K562 (cell line): ENCODE measurements at regions of chr6 and their contacts with region 1.

Region 1: DNA sequence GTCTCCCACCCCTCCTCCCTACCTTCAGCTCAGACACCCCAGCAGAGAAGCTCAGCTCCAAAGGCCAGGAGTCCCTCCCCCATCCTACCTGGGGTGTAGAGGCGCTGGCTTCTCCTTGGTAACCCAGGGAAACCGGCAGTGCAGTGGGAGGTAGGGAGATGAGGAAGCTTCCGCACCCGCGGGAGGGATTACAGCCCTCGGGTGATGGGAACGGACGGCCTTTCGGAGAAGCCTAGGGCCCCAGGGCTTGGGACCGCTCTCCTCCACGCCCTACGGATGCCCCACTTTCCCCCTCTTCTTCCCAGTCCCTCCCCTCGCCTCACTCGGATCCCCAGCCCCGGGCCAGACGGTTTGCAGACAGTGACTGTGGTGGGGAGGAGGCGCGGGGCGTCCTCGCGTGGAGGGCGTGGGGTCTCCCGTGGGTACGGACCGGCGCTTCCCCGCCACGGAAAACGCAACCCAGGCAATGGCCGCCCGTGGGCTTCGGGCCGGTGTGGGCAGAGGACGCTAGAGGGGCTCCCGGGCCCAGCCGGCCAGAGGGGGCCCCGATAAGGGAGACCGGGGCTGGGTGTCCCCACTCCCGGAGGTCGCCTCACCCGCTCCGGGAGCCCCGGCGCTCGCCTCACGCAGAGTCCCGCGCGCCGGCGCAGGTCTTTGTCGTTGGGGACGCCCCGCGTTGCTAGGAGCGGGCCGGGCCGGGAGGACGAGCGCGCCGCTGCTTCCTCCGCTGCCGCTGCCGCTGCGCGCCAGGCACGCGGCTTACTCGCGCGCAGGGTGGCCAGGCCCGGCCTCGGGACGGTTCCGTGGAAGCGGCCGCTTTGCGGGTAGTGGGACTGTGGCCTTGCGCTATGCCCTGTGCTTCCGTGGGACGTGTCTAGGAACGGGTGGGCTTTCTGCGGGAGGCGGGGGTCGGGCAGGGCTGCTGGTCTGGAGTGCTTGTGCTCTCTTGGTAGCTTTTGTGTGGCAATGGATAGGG is 15.8 kb downstream of the AARS2 start:
- DNase-seq: peak; percentile 53 to 79 (median 70)
- ATAC-seq: peak; percentile 85
- H3K4me3 ChIP-seq: peak overlapping the region; percentile 36
- H3K27ac ChIP-seq: no peak overlapping the region
- H3K4me1 ChIP-seq: peaks cover 0 to 16% of the 10 kb centered on the region in 2 experiments; a peak in 4 of 5 replicates
- H3K27me3 ChIP-seq: peaks cover 34 to 40% of the 10 kb centered on the region in 2 experiments; a peak in 4 of 5 replicates
- CTCF ChIP-seq: no peak
- EP300 ChIP-seq: no peak
- POLR2A ChIP-seq: peak; percentile 25; the same call in 1 of the 2 replicates
- RAD21 ChIP-seq: no peak

Region 2: GRCh38 chr6:44285552-44286284 is 11.6 kb before region 1 on chr6:
- CTCF ChIA-PET with region 1: no interaction called
- POLR2A ChIA-PET with region 1: interaction called, 20 read pairs
- in situ Hi-C with region 1: no loop called
- intact Hi-C with region 1: no loop called
- DNase-seq: peak in 2 of 4 experiments; percentile 47 to 55
- ATAC-seq: peak; percentile 72
- H3K4me3 ChIP-seq: no peak overlapping the region
- H3K27ac ChIP-seq: no peak overlapping the region
- H3K4me1 ChIP-seq: peaks cover 0 to 9% of the 10 kb centered on the region in 2 experiments; a peak in 2 of 5 replicates
- H3K27me3 ChIP-seq: peaks cover 51 to 86% of the 10 kb centered on the region in 2 experiments
- CTCF ChIP-seq: no peak
- EP300 ChIP-seq: no peak
- POLR2A ChIP-seq: no peak
- RAD21 ChIP-seq: no peak

Region 3: GRCh38 chr6:44312901-44313788 is 15.8 kb after region 1 on chr6 and contains the start of gene AARS2:
- CTCF ChIA-PET with region 1: no interaction called
- POLR2A ChIA-PET with region 1: interaction called, 116 read pairs
- in situ Hi-C with region 1: no loop called
- intact Hi-C with region 1: no loop called
- DNase-seq: peak; percentile 92 to 96 (median 94)
- ATAC-seq: peak; percentile 99
- H3K4me3 ChIP-seq: peak within 1 kb of the TSS; percentile 92
- H3K27ac ChIP-seq: peak within 1 kb of the TSS; percentile 73
- H3K4me1 ChIP-seq: peaks cover 5 to 6% of the 10 kb centered on the region in 2 experiments; a peak in 3 of 5 replicates
- H3K27me3 ChIP-seq: peaks cover 10 to 14% of the 10 kb centered on the region in 2 experiments; a peak in 4 of 5 replicates
- CTCF ChIP-seq: peak; percentile 94 to 99 (median 98)
- EP300 ChIP-seq: peak; percentile 48; the same call in 1 of the 2 replicates
- POLR2A ChIP-seq: peak; percentile 96
- RAD21 ChIP-seq: peak in 1 of 2 experiments; percentile 16; a peak in 1 of 4 replicates
- polyA plus RNA-seq, gene AARS2: 0.97 to 1.0 TPM